Heart left ventricle (tissue), 16 donors: ENCODE measurements at regions of chr22 and their contacts with region 1.

Region 1: GRCh38 chr22:37887610-37888378 is 18.3 kb upstream of the MICALL1 start:
- DNase-seq: no peak
- ATAC-seq: peak in 3 of 4 donors; percentile 66 to 81 (median 70)
- H3K4me3 ChIP-seq: no peak overlapping the region
- H3K27ac ChIP-seq: peak overlapping the region in 6 of 12 donors; percentile 14 to 83 (median 25)
- H3K4me1 ChIP-seq: peaks cover 0 to 13% (median 3%) of the 10 kb centered on the region in 12 donors
- H3K27me3 ChIP-seq: no peaks in the 10 kb centered on the region
- CTCF ChIP-seq: peak in 11 of 12 donors; percentile 30 to 57 (median 48)
- POLR2A ChIP-seq: no peak

Region 2: DNA sequence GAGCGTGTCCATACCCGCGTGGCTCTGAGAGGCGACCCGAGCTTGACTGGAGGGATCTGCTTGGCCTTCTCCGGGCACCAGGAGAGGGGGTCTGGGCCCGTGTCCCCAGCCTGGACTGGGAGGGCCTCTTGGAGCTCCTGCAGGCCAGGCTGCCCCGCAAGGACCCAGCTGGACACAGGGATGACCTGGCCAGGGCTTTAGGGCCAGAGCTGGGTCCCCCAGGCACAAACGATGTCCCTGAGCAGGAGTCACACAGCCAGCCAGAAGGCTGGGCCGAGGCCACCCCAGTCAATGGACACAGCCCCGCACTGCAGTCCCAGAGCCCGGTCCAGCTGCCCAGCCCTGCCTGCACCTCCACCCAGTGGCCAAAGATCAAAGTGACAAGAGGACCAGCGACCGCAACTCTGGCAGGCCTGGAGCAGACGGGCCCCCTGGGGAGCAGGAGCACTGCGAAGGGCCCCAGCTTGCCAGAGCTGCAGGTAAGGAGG is 152.8 kb before region 1 on chr22:
- intact Hi-C with region 1: no loop called
- DNase-seq: peak in 2 of 5 donors; percentile 53 to 62
- ATAC-seq: peak in 3 of 4 donors; percentile 29 to 44 (median 41)
- H3K4me3 ChIP-seq: no peak overlapping the region
- H3K27ac ChIP-seq: no peak overlapping the region
- H3K4me1 ChIP-seq: peaks cover 0 to 29% (median 6%) of the 10 kb centered on the region in 12 donors
- H3K27me3 ChIP-seq: no peaks in the 10 kb centered on the region
- CTCF ChIP-seq: peak; percentile 18 to 49 (median 36)
- POLR2A ChIP-seq: no peak

Region 3: GRCh38 chr22:37961062-37961461 is 73.3 kb after region 1 on chr22:
- intact Hi-C with region 1: loop called in 5 of 10 experiments (anchors 2 to 10 kb)
- DNase-seq: no peak
- ATAC-seq: no peak
- H3K4me3 ChIP-seq: no peak overlapping the region
- H3K27ac ChIP-seq: no peak overlapping the region
- H3K4me1 ChIP-seq: peaks cover 0 to 16% (median 8%) of the 10 kb centered on the region in 12 donors
- H3K27me3 ChIP-seq: no peaks in the 10 kb centered on the region
- CTCF ChIP-seq: no peak
- POLR2A ChIP-seq: no peak

Region 4: GRCh38 chr22:37965940-37966664 is 78.3 kb after region 1 on chr22:
- intact Hi-C with region 1: loop called in 5 of 10 experiments (anchors 2 to 10 kb)
- DNase-seq: no peak
- ATAC-seq: peak; percentile 28 to 77 (median 43)
- H3K4me3 ChIP-seq: no peak overlapping the region
- H3K27ac ChIP-seq: peak overlapping the region in 8 of 12 donors; percentile 8 to 63 (median 30)
- H3K4me1 ChIP-seq: peaks cover 0 to 22% (median 11%) of the 10 kb centered on the region in 12 donors
- H3K27me3 ChIP-seq: no peaks in the 10 kb centered on the region
- CTCF ChIP-seq: no peak
- POLR2A ChIP-seq: no peak